GM18951 (cell line): ENCODE measurements at regions of chr6 and their contacts with region 1.

Region 1: GRCh38 chr6:53179961-53180651 is 31.5 kb upstream of the GCM1 start:
- POLR2A ChIP-seq: no peak

Region 2: GRCh38 chr6:52749556-52750152 is 430.5 kb before region 1 on chr6:
- in situ Hi-C with region 1: no loop called
- POLR2A ChIP-seq: no peak

Region 3: DNA sequence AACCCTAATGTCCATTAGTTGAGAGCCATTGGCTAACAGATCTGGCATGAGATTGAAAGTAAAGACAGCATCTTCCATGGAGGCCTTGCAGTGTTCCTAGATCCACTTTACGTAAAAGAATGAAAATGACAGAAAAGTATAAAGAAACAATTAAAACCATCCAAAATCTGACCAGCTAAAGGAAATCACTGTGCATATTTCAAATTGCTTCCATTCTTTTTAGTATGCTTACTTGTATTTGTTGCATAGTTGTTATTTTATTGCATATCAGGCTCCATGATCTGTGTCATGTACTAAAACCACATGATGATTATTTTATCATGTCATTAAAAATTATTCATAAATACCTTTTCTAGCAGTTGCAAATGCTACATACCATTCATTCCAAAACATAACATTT is 296.9 kb after region 1 on chr6:
- in situ Hi-C with region 1: loop called (anchors 10 kb)
- POLR2A ChIP-seq: no peak